ENCODE measurements at regions of chr19 and their contacts with region 1.

Region 1: DNA sequence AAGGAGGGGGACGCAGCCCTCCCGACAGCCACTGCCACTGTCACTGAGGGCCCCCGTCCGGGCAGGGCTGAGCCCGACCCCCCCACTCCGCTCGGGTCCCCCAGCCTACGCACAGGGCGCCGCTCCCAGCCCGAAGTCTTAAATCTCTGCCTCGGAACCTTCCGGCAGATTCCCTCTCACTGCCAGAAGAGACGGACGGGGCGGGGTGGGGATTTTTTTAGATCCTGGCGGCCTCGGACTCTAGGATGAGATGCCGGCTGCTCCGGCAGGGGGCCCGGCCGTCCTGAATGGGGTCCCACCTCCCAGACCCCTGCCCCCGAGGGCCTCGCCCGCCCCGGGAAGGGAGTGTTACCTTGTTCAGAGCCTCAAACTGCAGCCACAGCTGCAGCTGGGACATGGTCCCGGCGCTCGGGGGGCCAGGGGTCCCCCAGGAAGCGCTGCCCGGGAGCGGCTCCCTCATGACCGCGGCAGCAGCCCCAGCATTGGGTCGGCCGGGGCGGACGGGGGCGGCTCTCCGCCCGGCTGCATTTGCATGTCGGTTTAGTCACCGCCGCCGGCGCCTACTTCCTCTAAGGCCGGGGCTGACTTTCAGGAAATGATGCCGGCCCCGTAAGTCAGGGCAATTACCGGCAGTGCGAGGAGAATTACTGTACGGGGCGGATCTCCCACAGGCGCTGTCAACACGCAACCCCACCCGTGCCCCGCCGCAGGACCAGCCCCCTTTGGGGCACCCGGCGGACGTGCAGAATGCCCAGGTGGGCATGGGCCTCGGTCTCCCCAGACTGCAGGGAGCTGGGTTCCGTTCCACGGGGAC is 28.2 kb downstream of the GPX4 start:
- DNase-seq: peak; percentile 96
- ATAC-seq: peak; percentile 77 to 86

Region 2: DNA sequence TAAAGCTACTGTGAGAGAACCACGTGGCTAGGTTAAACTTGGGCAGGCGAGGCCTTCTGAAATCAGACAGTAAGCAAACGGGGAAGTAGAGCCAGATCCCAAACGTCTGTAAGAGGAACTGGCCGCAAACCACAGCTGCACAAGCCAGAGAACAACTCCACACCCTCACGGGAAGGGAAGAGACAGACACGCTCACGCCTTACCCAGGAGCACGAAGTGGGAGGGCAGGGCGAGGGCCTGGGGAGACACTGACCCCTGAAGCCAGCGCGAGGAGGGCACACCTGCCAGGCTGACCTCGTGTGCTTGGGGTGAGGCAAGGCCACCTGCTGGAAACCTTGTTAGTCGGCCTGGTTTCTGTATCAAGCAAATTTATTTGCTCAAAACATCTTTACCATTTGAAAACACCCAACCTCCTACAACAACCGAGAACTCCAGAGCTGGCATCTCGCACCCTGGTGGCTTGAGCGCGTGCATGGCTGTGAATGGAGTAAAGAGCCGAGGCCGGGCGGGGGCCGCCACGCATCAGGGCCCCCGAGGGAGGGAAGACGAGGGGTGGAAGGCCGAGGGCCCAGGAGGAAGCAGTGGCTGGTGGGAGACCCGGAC is 44.0 kb before region 1 on chr19:
- intact Hi-C with region 1: no loop called
- DNase-seq: no peak
- ATAC-seq: peak; percentile 45 to 50

Region 3: GRCh38 chr19:1173845-1174809 is 42.2 kb after region 1 on chr19 and contains the start of gene SBNO2:
- intact Hi-C with region 1: loop called in 1 of 2 experiments (anchors 5 kb)
- DNase-seq: peak; percentile 91
- ATAC-seq: peak; percentile 79 to 82
- total RNA-seq, gene SBNO2: 27.2 to 64.2 TPM